Posterior cingulate gyrus (tissue), 11 donors: ENCODE measurements at regions of chr15 and their contacts with region 1.

Region 1: DNA sequence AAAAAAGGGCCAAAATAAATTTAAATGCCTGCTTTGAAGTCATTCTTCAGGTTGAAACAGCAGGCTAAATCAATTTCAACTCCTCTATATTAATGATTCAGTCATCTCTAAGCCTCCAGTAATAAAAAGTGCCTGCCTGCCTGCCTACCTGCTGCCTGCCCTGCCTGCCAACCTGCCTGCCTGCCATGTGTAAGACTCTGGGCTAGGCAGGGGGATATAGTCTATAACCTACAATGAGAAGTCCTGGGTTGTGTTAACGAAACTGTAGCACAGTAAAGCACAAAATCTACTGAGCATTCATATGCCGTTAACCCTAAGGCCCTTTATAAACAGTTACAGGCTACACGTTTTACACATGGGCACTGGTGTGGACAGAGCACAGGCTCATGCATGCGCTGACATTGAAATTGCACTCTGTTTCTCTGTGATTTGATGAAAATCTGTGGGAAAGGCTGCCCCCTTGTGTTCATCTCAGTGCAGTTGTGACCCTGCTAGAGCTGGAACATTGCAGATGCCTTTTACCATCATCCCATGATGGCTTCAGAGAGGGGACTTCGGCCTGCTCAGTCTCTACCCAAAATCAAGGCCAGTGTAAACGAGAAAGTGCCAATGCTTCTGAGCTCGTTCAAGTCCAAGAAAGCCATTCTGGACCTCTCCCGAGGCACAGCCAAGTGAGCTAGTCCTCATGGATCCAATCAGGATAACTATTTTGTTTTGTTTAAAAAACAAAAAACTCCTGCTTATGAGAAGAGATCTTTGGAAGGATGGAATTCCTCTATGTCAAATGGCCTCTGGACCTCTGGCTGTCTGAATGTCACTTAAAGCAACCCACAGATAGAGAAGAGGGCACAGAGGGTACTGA is 64.6 kb downstream of the EFL1 start:
- DNase-seq: peak; percentile 39 to 92 (median 78)

Region 2: GRCh38 chr15:81274931-81275707 is 922.8 kb before region 1 on chr15:
- intact Hi-C with region 1: loop called (anchors 5 kb)
- DNase-seq: peak; percentile 52 to 97 (median 82)

Region 3: DNA sequence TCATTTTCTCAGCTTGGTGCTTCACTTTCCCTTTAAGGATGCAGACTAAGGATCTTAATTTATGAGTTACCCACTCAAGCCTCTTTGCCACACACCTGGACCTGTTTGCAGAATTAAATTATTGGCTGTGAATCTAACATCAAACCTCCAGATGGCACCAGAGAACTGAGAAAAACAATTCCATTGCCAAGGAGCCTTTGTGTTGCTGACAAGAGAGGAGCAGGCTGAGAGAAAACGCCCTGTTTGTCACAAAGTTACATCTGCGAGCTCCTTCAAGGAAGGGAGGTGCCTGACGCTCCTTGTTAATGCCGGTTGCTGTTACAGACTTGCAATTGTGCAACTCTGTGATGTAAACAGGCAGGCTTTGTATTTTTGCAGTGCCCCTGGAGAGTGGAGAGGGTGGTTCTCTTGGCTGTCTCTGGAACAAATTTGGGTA is 787.6 kb before region 1 on chr15:
- intact Hi-C with region 1: loop called (anchors 2 kb)
- DNase-seq: peak in 9 of 10 donors; percentile 23 to 87 (median 42)

Region 4: DNA sequence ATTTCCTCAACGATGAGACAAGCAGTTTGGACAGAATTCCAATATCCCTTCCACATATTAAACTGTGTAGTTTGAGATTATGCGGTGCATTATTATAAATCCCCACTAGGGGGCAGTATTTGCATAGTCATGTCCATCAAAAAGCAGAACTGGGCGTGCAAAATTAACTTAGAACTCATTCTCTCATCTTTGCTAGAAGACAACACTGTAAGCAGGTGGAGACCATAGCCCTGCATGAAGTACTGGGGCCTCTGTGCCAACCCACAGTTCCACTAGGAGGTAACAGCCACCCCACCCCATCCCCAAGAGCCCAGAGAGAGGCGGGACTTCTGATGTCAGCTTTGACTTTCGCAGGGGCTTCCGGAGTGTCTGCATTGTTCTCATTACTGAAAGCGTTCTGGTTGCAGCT is 717.3 kb before region 1 on chr15:
- intact Hi-C with region 1: loop called (anchors 2 kb)
- DNase-seq: peak in 1 of 10 donors; percentile 11

Region 5: DNA sequence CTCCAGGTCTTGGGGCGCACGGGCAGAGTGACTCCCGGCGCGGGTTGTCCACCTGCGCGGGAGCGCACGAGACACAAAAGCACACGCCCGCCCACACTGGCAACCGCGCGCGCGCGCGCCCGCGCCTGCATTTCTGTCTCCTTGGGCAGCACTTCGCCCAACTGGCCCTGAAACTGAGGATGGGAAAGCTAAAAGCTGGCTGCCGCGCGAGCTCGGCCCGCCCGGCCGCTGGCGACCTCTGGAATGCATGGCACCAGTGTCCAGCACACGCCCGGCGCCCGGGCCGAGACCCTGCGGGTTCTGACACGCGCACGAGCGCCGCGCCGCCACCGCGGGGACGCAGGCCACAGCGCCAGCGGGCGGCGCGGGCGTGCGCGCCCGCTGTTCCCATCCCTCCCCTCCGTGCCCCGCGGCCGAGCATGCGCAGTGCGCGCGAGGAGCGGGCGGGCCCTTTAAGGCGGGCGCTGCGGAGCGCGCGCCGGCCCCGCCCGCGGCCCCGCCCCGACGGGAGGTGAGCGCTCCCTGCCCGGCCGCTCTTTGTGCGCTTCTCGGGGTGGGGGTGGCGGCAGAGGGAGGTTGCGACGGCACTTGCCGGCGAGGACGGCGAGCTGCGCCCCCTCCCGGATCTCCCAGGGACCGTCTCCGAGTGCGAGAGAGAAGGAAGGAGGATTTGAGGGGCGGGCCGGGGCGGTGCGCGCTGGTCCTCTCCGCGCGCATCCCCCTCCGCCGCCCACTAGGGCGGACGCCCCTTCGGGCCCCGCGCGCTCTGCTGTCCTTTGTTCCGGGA is 151.1 kb before region 1 on chr15:
- intact Hi-C with region 1: loop called (anchors 5 kb)
- DNase-seq: peak; percentile 78 to 98 (median 86)